ENCODE measurements at regions of chr10 and their contacts with region 1.

Region 1: GRCh38 chr10:5977471-5978229 is at the start of gene IL15RA:
- DNase-seq: peak; percentile 81
- H3K4me3 ChIP-seq: peak within 1 kb of the TSS; percentile 89
- H3K27ac ChIP-seq: peak within 1 kb of the TSS; percentile 33
- H3K4me1 ChIP-seq: peaks cover 19% of the 10 kb centered on the region
- CTCF ChIP-seq: peak; percentile 58
- total RNA-seq, gene IL15RA: 5.5 and 14.5 TPM in 2 replicates

Region 2: GRCh38 chr10:5829267-5829666 is 148.4 kb before region 1 on chr10:
- CTCF ChIA-PET with region 1: no interaction called
- POLR2A ChIA-PET with region 1: no interaction called
- intact Hi-C with region 1: no loop called
- DNase-seq: no peak
- H3K4me3 ChIP-seq: no peak overlapping the region
- H3K27ac ChIP-seq: no peak overlapping the region
- H3K4me1 ChIP-seq: no peaks in the 10 kb centered on the region
- CTCF ChIP-seq: no peak

Region 3: GRCh38 chr10:5889624-5890451 is 87.8 kb before region 1 on chr10 and contains the starts of genes ANKRD16 and FBH1:
- CTCF ChIA-PET with region 1: no interaction called
- POLR2A ChIA-PET with region 1: interaction called, 5 read pairs
- intact Hi-C with region 1: loop called (anchors 2 kb)
- DNase-seq: peak; percentile 99
- H3K4me3 ChIP-seq: peak within 1 kb of the TSS; percentile 88
- H3K27ac ChIP-seq: peak within 1 kb of the TSS; percentile 35
- H3K4me1 ChIP-seq: peaks cover 26% of the 10 kb centered on the region
- CTCF ChIP-seq: no peak
- total RNA-seq, gene ANKRD16: 7.9 and 15.2 TPM in 2 replicates
- total RNA-seq, gene FBH1: 61.9 and 65.6 TPM in 2 replicates

Region 4: DNA sequence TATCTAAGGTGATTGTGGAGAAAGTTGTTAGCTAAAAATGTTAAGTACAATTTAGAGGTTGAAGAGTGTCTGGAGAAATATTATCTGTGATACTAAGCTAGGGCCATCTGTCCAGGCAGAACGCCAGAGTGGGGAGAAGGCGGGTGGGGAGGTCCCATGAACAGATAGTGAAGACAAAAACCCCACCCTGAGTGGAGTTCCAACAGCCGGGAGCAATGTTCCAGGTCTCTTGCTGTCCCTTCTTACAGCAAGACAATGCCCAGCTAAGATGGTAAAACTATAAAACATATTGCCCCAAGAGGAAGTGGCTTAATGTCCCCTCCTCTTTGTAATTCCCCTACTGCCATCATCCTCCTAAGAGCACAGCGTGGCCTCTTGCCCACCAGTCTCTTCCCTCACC is 10.1 kb after region 1 on chr10:
- CTCF ChIA-PET with region 1: no interaction called
- POLR2A ChIA-PET with region 1: interaction called, 13 read pairs
- intact Hi-C with region 1: no loop called
- DNase-seq: no peak
- H3K4me3 ChIP-seq: no peak overlapping the region
- H3K27ac ChIP-seq: no peak overlapping the region
- H3K4me1 ChIP-seq: no peaks in the 10 kb centered on the region
- CTCF ChIP-seq: no peak

Measured in OCI-LY7 (cell line).